HepG2 (cell line): ENCODE measurements at regions of chr17 and their contacts with region 1.

Region 1: DNA sequence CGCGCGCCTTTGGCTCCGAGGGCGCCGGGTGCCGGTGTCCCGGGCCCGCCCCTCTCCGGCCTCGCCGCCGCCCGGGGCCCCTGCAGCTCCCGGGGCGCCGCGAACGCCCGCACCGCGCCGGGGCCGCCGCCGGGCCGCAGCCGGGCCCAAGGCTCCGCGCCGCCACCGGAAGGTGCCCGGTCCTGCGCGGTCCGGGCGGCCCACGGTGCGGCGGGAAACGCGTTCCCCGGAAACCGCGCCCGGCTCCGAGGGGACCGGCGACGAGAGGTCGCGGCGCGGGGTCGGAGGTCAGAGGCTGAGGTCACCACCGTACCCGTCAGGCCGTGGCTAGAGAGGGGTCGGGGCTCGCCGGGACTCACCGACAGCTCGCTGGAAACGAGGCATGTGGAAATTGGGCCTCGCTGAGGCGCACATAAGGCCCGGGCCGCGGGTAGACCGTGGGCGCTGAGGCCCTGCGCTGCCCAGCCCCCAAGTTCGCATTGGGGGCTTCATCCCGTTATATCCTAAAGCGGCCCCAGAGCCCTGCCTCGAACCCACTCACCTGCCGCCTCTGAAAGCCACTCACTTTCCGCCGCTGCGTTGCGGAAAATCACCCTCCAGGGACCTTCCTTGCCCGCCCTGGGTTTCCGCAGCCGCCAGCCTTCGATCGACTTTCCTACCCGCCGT is at the start of gene DUS1L:
- DNase-seq: no peak
- ATAC-seq: peak; percentile 27
- H3K4me3 ChIP-seq: peak within 1 kb of the TSS; percentile 69 to 99 (median 92)
- H3K27ac ChIP-seq: peak within 1 kb of the TSS; percentile 64
- H3K4me1 ChIP-seq: peaks cover 28% of the 10 kb centered on the region
- H3K27me3 ChIP-seq: no peaks in the 10 kb centered on the region
- CTCF ChIP-seq: peak; percentile 42
- EP300 ChIP-seq: peak; percentile 46 to 48; a peak in 1 of 4 replicates
- POLR2A ChIP-seq: 0 out of 4 replicates have a peak, but pooled peaks of 1 of the 2 experiments have one; percentile 38
- RAD21 ChIP-seq: peak; percentile 51; the same call in 1 of the 2 replicates
- total RNA-seq, gene DUS1L: 67.9 and 109 TPM in 2 replicates

Region 2: DNA sequence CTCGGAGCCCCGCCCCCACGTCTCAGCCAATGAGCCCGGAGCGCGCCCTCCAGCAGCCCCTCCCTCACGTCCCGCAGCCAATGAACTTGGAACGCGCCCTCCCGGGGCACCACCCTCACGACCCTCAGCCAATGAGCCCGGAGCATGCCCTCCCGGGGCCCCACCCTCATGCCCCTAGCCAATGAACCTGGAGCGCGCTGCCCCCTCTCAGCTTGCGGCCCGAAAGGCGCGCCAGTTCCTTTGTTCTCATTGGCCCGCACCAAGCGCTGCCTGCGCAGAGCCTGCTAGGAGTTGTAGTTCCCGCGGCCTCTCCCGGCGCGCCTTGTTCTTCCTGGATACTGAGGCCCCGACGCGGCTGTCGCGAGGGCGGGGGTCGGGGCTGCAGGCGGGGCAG is 42.8 kb before region 1 on chr17 and contains the start of gene LRRC45:
- CTCF ChIA-PET with region 1: no interaction called
- POLR2A ChIA-PET with region 1: no interaction called
- in situ Hi-C with region 1: no loop called
- intact Hi-C with region 1: no loop called
- DNase-seq: peak; percentile 99
- ATAC-seq: peak; percentile 76
- H3K4me3 ChIP-seq: peak within 1 kb of the TSS; percentile 80 to 90 (median 90)
- H3K27ac ChIP-seq: peak within 1 kb of the TSS; percentile 78
- H3K4me1 ChIP-seq: peaks cover 69% of the 10 kb centered on the region
- H3K27me3 ChIP-seq: no peaks in the 10 kb centered on the region; a peak in 1 of 5 replicates
- CTCF ChIP-seq: peak; percentile 9; the same call in 1 of the 2 replicates
- EP300 ChIP-seq: no peak
- POLR2A ChIP-seq: no peak
- RAD21 ChIP-seq: no peak
- total RNA-seq, gene LRRC45: 21.4 and 48.1 TPM in 2 replicates

Region 3: DNA sequence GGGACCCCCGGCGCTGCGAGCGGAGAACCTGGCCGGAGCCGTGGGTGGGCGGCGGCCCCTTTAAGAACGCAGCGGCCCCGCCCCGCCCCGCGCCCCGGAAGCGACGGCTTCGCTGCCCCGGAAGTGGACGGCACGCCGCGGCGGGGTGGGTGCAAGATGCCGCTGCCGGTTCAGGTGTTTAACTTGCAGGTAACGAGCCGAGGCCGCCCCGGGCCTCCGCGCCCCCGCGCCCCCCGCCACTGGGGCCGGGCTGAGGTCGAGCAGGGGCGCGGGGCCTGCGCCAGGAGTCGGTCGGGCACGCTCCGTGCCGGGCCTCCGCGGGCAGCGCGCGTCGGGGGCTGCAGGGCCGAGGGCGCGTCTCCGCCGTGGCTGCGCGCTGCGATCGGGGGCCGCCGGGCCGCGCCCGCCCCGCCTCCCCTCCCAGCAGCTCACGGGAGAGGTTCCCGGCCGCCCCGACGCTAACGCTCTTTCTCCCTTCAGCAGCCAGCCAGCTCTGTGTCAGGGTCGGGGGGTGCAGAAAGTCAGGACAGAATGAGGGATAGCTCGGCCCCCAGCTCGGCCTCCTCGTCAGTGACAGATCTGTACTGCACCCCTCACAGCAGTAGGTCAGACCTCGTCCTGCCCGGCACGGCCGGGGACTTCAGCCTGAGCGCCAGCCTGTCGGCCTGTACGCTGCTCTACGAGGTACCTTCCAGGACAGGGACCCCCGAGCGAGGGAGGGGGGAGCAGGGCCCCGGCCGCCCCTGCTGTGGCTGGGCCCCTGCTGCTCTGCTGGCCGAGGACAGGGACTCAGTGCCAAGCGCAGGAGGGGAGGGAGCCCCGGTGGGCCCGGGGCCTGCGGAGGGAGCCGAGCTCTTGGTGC is 13.8 kb before region 1 on chr17 and contains the starts of genes GPS1 and RFNG:
- CTCF ChIA-PET with region 1: no interaction called
- POLR2A ChIA-PET with region 1: interaction called, 14 read pairs
- in situ Hi-C with region 1: no loop called
- intact Hi-C with region 1: no loop called
- DNase-seq: peak; percentile 60
- ATAC-seq: peak; percentile 49
- H3K4me3 ChIP-seq: peak within 1 kb of the TSS; percentile 76 to 99 (median 95)
- H3K27ac ChIP-seq: peak within 1 kb of the TSS; percentile 71
- H3K4me1 ChIP-seq: peaks cover 50% of the 10 kb centered on the region
- H3K27me3 ChIP-seq: no peaks in the 10 kb centered on the region; a peak in 2 of 5 replicates
- CTCF ChIP-seq: no peak
- EP300 ChIP-seq: no peak
- POLR2A ChIP-seq: no peak
- RAD21 ChIP-seq: peak; percentile 54; the same call in 1 of the 2 replicates
- total RNA-seq, gene GPS1: 106 and 124 TPM in 2 replicates
- total RNA-seq, gene RFNG: 27.8 and 64.0 TPM in 2 replicates

Region 4: DNA sequence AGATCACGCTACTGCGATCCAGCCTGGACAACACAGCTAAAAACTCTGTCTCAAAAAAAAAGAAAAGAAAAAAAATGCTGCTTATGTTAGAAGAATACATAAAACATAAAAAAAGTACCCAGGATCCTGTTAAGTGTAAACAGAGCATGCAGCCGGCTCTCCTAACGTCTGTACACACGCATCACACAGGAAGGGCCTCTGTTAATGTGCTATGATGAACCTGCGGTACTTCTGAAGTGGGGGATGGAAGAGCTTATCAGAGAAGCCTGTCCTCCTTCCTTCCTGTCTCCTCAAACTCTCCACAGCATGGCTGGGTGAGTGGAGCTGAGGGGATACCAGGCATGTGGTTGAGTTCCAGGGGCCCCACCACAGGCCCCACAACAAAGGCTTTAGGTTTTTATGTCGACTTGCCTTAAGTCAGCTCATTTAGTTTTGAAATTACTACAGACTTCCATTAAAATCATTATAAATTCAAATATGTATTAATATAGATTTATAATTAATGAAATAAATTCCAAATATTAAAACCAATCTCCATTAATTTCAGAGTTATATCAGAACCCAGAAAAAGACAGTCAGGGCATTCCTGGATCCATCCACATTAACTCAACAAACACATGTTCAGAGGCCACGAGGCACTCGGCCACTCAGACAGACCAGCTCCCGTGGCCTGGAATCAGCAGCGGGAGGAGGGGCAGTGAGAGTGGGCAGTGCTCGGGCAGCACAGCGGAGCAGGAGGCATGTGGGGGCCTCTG is 135.1 kb after region 1 on chr17:
- CTCF ChIA-PET with region 1: no interaction called
- POLR2A ChIA-PET with region 1: no interaction called
- in situ Hi-C with region 1: no loop called
- intact Hi-C with region 1: no loop called
- DNase-seq: no peak
- ATAC-seq: no peak
- H3K4me3 ChIP-seq: no peak overlapping the region
- H3K27ac ChIP-seq: no peak overlapping the region
- H3K4me1 ChIP-seq: peaks cover 12% of the 10 kb centered on the region
- H3K27me3 ChIP-seq: no peaks in the 10 kb centered on the region
- CTCF ChIP-seq: no peak
- EP300 ChIP-seq: no peak
- POLR2A ChIP-seq: no peak
- RAD21 ChIP-seq: no peak